Naive thymus-derived CD4-positive, alpha-beta T cell (primary cell): ENCODE measurements at regions of chr14 and their contacts with region 1.

Region 1: GRCh38 chr14:93655078-93655750 is 133.1 kb downstream of the PRIMA1 start:
- DNase-seq: peak in 1 of 9 donors; percentile 2
- ATAC-seq: no peak
- H3K4me3 ChIP-seq: no peak overlapping the region
- H3K4me3 Mint-ChIP-seq: no peak overlapping the region
- H3K27ac ChIP-seq: no peak overlapping the region
- H3K27ac Mint-ChIP-seq: no peak overlapping the region
- H3K4me1 ChIP-seq: no peaks in the 10 kb centered on the region
- H3K4me1 Mint-ChIP-seq: no peaks in the 10 kb centered on the region
- H3K27me3 ChIP-seq: peaks cover 4 to 6% of the 10 kb centered on the region in 2 donors
- H3K27me3 Mint-ChIP-seq: peaks cover 10 to 62% (median 36%) of the 10 kb centered on the region in 5 donors

Region 2: DNA sequence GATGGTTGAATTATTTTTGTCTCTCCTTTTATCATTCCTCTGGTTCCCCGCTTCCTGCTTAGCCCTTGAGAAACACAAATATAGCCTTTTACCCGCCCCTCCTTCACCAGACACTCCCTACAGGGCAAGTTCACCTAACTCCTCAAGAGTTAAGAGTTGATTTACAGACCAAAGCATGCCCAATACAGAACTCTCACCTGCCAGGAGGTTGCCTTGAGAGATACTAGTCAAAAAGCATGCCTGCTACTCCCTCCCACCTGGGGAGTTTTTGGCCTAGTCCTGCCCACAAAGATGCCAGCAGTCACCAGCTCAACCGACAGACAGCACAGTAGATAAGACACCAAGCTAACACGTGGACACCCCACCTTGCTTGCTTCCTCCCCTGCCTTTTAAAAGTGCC is 918.0 kb before region 1 on chr14:
- CTCF ChIA-PET with region 1: no interaction called
- POLR2A ChIA-PET with region 1: no interaction called
- intact Hi-C with region 1: no loop called
- DNase-seq: peak in 5 of 9 donors; percentile 12 to 37 (median 23)
- ATAC-seq: peak; percentile 85
- H3K4me3 ChIP-seq: no peak overlapping the region
- H3K4me3 Mint-ChIP-seq: peak overlapping the region; percentile 22 to 76 (median 48)
- H3K27ac ChIP-seq: peak overlapping the region; percentile 15
- H3K27ac Mint-ChIP-seq: peak overlapping the region; percentile 36 to 91 (median 78)
- H3K4me1 ChIP-seq: peaks cover 0 to 15% of the 10 kb centered on the region in 2 donors
- H3K4me1 Mint-ChIP-seq: peaks cover 13 to 29% (median 18%) of the 10 kb centered on the region in 7 donors
- H3K27me3 ChIP-seq: no peaks in the 10 kb centered on the region
- H3K27me3 Mint-ChIP-seq: peaks cover 0 to 26% (median 0%) of the 10 kb centered on the region in 5 donors

Region 3: GRCh38 chr14:93676419-93676958 is 21.3 kb after region 1 on chr14:
- CTCF ChIA-PET with region 1: no interaction called
- POLR2A ChIA-PET with region 1: no interaction called
- intact Hi-C with region 1: no loop called
- DNase-seq: no peak
- ATAC-seq: no peak
- H3K4me3 ChIP-seq: no peak overlapping the region
- H3K4me3 Mint-ChIP-seq: no peak overlapping the region
- H3K27ac ChIP-seq: no peak overlapping the region
- H3K27ac Mint-ChIP-seq: no peak overlapping the region
- H3K4me1 ChIP-seq: no peaks in the 10 kb centered on the region
- H3K4me1 Mint-ChIP-seq: peaks cover 0 to 2% (median 0%) of the 10 kb centered on the region in 7 donors
- H3K27me3 ChIP-seq: no peaks in the 10 kb centered on the region
- H3K27me3 Mint-ChIP-seq: peaks cover 14 to 29% (median 29%) of the 10 kb centered on the region in 5 donors

Region 4: GRCh38 chr14:93892923-93893558 is 237.8 kb after region 1 on chr14:
- CTCF ChIA-PET with region 1: no interaction called
- POLR2A ChIA-PET with region 1: no interaction called
- intact Hi-C with region 1: loop called in 1 of 2 experiments (anchors 5 kb)
- DNase-seq: peak; percentile 23 to 72 (median 55)
- ATAC-seq: peak; percentile 78
- H3K4me3 ChIP-seq: no peak overlapping the region
- H3K4me3 Mint-ChIP-seq: no peak overlapping the region
- H3K27ac ChIP-seq: no peak overlapping the region
- H3K27ac Mint-ChIP-seq: no peak overlapping the region
- H3K4me1 ChIP-seq: no peaks in the 10 kb centered on the region
- H3K4me1 Mint-ChIP-seq: no peaks in the 10 kb centered on the region
- H3K27me3 ChIP-seq: no peaks in the 10 kb centered on the region
- H3K27me3 Mint-ChIP-seq: peaks cover 17 to 35% (median 23%) of the 10 kb centered on the region in 5 donors

Region 5: DNA sequence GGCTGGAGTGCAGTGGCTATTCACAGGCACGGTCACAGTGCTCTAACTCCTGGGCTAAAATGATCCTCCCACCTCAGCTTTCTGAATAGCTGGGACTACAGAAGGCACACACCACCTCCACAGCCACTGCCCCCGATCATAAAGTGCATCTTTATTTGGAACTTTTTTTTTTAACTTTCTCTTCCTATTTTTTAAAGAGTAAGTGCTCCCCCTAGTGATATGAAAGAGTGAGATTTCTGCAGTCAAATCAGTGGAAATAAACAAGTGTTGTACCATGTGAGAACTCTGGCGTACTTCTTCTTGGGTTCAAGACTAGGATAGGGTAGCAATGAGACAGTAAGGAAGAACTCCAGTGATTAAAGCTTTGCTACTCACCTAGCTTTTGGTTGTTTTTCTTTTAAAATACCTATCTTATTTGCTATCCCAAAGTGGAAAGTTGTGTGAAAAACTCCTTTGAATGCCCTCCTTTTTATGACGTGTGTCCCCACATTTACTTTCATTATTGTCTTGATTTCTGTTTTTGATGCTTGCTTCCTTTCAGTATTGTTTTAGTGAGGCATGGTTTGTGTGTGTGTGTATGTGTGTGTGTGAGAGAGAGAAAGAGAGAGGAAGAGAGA is 525.5 kb after region 1 on chr14:
- CTCF ChIA-PET with region 1: no interaction called
- POLR2A ChIA-PET with region 1: no interaction called
- intact Hi-C with region 1: loop called in 1 of 2 experiments (anchors 2 kb)
- DNase-seq: peak in 7 of 9 donors; percentile 57 to 81 (median 71)
- ATAC-seq: peak; percentile 93
- H3K4me3 ChIP-seq: peak overlapping the region; percentile 5
- H3K4me3 Mint-ChIP-seq: peak overlapping the region in 8 of 10 donors; percentile 6 to 75 (median 50)
- H3K27ac ChIP-seq: peak overlapping the region; percentile 56
- H3K27ac Mint-ChIP-seq: peak overlapping the region in 8 of 9 donors; percentile 16 to 90 (median 74)
- H3K4me1 ChIP-seq: peaks cover 0 to 1% of the 10 kb centered on the region in 2 donors
- H3K4me1 Mint-ChIP-seq: peaks cover 10 to 23% (median 18%) of the 10 kb centered on the region in 7 donors
- H3K27me3 ChIP-seq: no peaks in the 10 kb centered on the region
- H3K27me3 Mint-ChIP-seq: peaks cover 0 to 36% (median 0%) of the 10 kb centered on the region in 5 donors

Region 6: GRCh38 chr14:94485944-94486841 is 831.0 kb after region 1 on chr14:
- CTCF ChIA-PET with region 1: no interaction called
- POLR2A ChIA-PET with region 1: no interaction called
- intact Hi-C with region 1: loop called in 1 of 2 experiments (anchors 5 kb)
- DNase-seq: peak in 7 of 9 donors; percentile 13 to 56 (median 30)
- ATAC-seq: peak; percentile 66
- H3K4me3 ChIP-seq: no peak overlapping the region
- H3K4me3 Mint-ChIP-seq: no peak overlapping the region
- H3K27ac ChIP-seq: no peak overlapping the region
- H3K27ac Mint-ChIP-seq: no peak overlapping the region
- H3K4me1 ChIP-seq: no peaks in the 10 kb centered on the region
- H3K4me1 Mint-ChIP-seq: peaks cover 0 to 3% (median 0%) of the 10 kb centered on the region in 7 donors
- H3K27me3 ChIP-seq: peaks cover 0 to 3% of the 10 kb centered on the region in 2 donors
- H3K27me3 Mint-ChIP-seq: peaks cover 2 to 35% (median 26%) of the 10 kb centered on the region in 5 donors